Endothelial cell of umbilical vein (primary cell): ENCODE measurements at regions of chr15 and their contacts with region 1.

Region 1: DNA sequence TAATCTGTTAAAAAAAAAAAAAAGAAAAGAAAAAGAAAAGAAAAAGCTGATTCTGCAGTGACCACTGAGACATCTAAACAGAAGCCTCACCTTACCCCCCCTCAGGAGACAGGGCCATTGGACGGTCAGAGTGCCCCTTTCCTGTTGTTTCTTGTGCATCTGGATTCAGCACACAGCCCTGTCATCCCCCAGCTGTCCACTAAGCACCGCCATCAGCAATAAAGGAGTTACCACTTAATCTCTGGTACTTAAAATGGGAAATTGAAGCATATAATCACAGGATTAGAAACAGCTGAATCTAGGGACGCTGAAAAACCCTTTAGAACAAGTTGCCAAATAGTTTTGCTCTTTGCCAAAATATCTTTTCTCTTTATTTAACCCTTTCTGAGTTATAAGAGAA is 62.5 kb downstream of the TRIM69 start:
- DNase-seq: peak; percentile 53
- H3K4me3 ChIP-seq: no peak overlapping the region
- H3K27ac ChIP-seq: no peak overlapping the region
- H3K4me1 ChIP-seq: peaks cover 11% of the 10 kb centered on the region
- H3K27me3 ChIP-seq: no peaks in the 10 kb centered on the region
- CTCF ChIP-seq: peak; percentile 16
- POLR2A ChIP-seq: no peak

Region 2: DNA sequence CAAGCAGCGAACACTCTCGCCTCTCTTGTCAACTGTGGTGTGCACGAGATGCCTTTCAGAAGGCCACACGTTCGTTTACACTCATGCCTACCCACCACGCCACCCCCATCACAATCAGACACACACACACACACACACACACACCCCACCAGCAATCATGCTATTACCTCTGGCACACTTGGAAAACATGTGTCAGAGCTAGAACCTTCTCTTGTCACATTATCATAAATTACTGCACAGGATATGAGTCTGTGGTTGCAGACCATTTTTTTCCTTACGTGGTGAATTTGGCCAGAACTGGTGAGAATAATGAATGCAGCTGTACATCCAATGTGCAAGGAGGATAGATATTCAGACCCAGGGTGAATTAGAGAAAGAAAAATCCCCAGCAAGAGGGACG is 10.1 kb before region 1 on chr15:
- CTCF ChIA-PET with region 1: interaction called, 10 read pairs
- POLR2A ChIA-PET with region 1: no interaction called
- dilution Hi-C with region 1: no loop called
- intact Hi-C with region 1: no loop called
- DNase-seq: peak; percentile 77
- H3K4me3 ChIP-seq: no peak overlapping the region
- H3K27ac ChIP-seq: no peak overlapping the region
- H3K4me1 ChIP-seq: peaks cover 4% of the 10 kb centered on the region
- H3K27me3 ChIP-seq: no peaks in the 10 kb centered on the region
- CTCF ChIP-seq: no peak
- POLR2A ChIP-seq: no peak